Ovary (tissue), 10 donors: ENCODE measurements at regions of chr19 and their contacts with region 1.

Region 1: GRCh38 chr19:18281082-18282020 is at the start of gene JUND:
- DNase-seq: peak; percentile 98 to 99 (median 99)
- H3K4me3 ChIP-seq: peak within 1 kb of the TSS; percentile 93
- H3K27ac ChIP-seq: peak within 1 kb of the TSS; percentile 99 to 100
- H3K4me1 ChIP-seq: peaks cover 16% of the 10 kb centered on the region
- H3K27me3 ChIP-seq: no peaks in the 10 kb centered on the region
- CTCF ChIP-seq: peak in 1 of 3 donors; percentile 32
- EP300 ChIP-seq: peak; percentile 95
- POLR2A ChIP-seq: peak; percentile 97
- total RNA-seq, gene JUND: 163 to 1,260 (median 581) TPM

Region 2: DNA sequence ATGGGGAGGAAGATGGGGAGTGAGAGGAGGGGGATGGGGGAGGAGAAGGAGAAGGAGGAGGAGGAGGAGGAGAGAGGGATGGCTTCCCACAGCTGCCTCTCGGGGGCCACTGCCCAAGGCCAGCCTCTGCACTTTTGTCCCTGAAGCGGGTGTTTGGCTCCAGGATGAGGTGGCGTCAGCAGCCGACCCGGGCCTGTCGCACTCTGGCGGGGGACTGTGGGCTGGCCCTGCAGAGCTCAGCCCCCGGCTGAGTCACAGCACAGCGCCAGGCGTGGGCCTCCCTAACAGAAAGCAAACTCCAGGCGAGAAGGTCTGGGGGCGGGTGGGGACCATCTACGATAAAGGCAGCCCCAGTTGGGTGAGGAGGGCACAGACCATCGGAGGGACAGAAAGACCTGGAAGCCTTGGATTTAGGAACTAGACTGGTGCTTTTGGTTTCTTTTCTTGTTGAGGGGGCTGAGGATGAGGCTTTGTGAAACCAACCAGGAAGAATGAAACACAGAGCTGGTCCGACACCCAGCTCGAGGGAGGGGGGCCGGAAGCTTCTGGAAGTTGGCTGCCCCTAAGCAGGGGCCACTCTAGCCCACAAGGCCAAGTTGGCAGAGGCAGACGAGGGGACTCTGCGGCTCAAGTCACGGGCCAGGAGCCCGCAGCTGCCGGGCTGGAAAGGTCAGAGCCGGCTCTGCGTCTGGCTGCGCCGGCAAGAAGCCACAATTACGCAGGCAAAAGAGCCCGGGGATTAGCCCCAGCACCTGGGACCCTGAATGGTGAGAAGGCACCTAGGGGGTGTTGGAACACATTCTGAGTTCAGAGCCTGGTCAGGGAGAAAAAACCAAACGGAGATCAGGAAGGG is 23.3 kb after region 1 on chr19:
- intact Hi-C with region 1: loop called in 1 of 4 experiments (anchors 2 kb)
- DNase-seq: peak; percentile 87 to 91 (median 89)
- H3K4me3 ChIP-seq: peak overlapping the region; percentile 40
- H3K27ac ChIP-seq: peak overlapping the region; percentile 82 to 98
- H3K4me1 ChIP-seq: peaks cover 18% of the 10 kb centered on the region
- H3K27me3 ChIP-seq: no peaks in the 10 kb centered on the region
- CTCF ChIP-seq: no peak
- EP300 ChIP-seq: no peak
- POLR2A ChIP-seq: peak; percentile 75